Heart left ventricle (tissue), 16 donors: ENCODE measurements at regions of chr2 and their contacts with region 1.

Region 1: DNA sequence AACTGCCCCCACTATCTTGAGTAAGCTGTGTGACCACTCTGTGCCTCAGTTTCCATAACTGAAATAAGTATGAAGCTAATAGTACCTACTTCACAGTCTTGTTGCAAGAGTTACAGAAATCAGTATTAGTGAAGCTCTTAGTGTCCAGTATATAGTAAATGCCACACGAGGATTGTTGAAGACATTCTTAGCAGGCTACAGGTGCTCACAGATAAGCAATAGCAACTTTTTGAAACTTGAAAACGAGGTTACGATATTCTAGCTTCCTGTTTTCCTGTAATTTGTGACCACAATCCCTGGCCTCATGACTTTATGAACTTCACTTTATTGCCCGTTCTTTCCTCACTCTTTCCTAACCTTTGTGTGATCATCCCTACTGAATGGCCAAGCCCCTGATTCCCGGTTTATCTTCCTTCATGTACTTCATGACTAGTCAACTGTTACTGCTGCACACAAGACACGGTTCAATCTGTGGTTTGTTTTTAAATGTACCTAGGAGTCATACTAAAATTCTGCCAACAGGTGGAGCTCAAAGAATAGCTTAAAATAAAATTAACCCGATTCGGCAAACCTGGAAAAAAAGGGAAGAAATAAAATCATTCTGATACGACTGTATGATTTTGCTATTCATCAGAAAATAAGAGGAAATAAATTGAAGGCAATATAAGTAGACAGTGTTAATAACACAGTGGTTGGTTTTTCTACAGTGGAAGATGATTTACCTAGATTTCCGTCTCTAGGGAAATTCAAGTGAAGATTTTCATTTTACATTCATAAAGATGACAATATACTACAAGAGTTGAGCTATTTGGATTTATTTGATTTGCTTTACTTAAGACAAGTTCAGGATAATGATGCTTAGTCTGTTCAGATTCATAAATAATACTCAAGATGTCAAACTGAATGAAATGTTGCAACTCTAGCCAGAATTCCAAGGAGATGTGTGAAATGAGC is 38.1 kb upstream of the STAT1 start:
- DNase-seq: no peak
- ATAC-seq: peak in 2 of 4 donors; percentile 18 to 45
- H3K4me3 ChIP-seq: no peak overlapping the region
- H3K27ac ChIP-seq: peak overlapping the region in 1 of 12 donors; percentile 10
- H3K4me1 ChIP-seq: peaks cover 0 to 37% (median 0%) of the 10 kb centered on the region in 12 donors
- H3K27me3 ChIP-seq: peaks cover 0 to 5% (median 0%) of the 10 kb centered on the region in 9 donors
- CTCF ChIP-seq: peak; percentile 38 to 68 (median 54)
- POLR2A ChIP-seq: no peak

Region 2: DNA sequence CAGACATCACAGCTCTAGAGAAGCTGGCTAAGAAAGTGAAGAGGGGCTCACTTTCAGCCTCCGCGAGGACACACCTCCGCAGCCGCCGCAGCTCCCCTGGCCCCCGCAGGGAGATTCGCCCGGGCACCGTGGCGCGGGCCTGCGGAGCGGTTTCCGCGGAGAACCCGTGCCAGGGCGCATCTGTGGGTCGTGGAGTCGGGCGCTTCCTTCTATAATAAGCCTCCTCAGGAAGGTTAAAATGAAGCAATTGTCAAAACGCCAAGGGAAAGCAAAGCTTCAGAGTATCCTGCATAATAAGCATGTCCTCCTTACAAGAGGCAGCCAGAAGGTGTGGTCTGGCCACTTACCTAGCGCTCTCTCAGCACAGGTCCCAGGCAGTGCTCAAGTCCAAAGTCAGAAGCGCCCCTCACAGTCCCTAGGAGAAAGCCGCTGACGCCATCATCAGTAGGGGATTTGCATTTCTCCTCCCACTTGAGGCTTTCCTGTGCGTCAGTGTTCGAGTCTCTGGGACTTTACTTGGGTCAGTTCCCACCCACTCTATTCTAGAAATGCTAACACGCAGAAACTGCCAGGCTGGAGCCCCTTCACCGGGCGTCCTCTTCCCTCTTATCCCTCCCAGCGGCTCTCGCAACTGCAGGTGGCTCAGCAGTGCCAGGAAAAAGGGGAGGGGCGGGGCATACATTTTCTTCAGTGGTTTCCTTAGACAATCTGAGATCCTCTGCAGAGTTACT is 98.7 kb after region 1 on chr2 and contains the start of gene STAT4:
- intact Hi-C with region 1: loop called (anchors 2 to 5 kb)
- DNase-seq: peak; percentile 36 to 69 (median 42)
- ATAC-seq: peak; percentile 49 to 81 (median 65)
- H3K4me3 ChIP-seq: peak within 1 kb of the TSS; percentile 19 to 70 (median 54)
- H3K27ac ChIP-seq: peak within 1 kb of the TSS in 4 of 12 donors; percentile 40 to 83 (median 58)
- H3K4me1 ChIP-seq: peaks cover 0 to 17% (median 2%) of the 10 kb centered on the region in 12 donors
- H3K27me3 ChIP-seq: no peaks in the 10 kb centered on the region
- CTCF ChIP-seq: no peak
- POLR2A ChIP-seq: no peak
- total RNA-seq, gene STAT4: 0.32 to 21.5 (median 3.1) TPM

Region 3: GRCh38 chr2:191515551-191515950 is 463.4 kb after region 1 on chr2:
- intact Hi-C with region 1: loop called in 8 of 10 experiments (anchors 2 to 10 kb)
- DNase-seq: no peak
- ATAC-seq: peak in 3 of 4 donors; percentile 31 to 53 (median 33)
- H3K4me3 ChIP-seq: no peak overlapping the region
- H3K27ac ChIP-seq: no peak overlapping the region
- H3K4me1 ChIP-seq: peaks cover 0 to 15% (median 0%) of the 10 kb centered on the region in 12 donors
- H3K27me3 ChIP-seq: no peaks in the 10 kb centered on the region
- CTCF ChIP-seq: no peak
- POLR2A ChIP-seq: no peak

Region 4: GRCh38 chr2:191521608-191522208 is 469.6 kb after region 1 on chr2:
- intact Hi-C with region 1: loop called in 9 of 10 experiments (anchors 2 to 10 kb)
- DNase-seq: no peak
- ATAC-seq: no peak
- H3K4me3 ChIP-seq: no peak overlapping the region
- H3K27ac ChIP-seq: no peak overlapping the region
- H3K4me1 ChIP-seq: no peaks in the 10 kb centered on the region
- H3K27me3 ChIP-seq: no peaks in the 10 kb centered on the region
- CTCF ChIP-seq: peak; percentile 72 to 93 (median 80)
- POLR2A ChIP-seq: no peak

Region 5: DNA sequence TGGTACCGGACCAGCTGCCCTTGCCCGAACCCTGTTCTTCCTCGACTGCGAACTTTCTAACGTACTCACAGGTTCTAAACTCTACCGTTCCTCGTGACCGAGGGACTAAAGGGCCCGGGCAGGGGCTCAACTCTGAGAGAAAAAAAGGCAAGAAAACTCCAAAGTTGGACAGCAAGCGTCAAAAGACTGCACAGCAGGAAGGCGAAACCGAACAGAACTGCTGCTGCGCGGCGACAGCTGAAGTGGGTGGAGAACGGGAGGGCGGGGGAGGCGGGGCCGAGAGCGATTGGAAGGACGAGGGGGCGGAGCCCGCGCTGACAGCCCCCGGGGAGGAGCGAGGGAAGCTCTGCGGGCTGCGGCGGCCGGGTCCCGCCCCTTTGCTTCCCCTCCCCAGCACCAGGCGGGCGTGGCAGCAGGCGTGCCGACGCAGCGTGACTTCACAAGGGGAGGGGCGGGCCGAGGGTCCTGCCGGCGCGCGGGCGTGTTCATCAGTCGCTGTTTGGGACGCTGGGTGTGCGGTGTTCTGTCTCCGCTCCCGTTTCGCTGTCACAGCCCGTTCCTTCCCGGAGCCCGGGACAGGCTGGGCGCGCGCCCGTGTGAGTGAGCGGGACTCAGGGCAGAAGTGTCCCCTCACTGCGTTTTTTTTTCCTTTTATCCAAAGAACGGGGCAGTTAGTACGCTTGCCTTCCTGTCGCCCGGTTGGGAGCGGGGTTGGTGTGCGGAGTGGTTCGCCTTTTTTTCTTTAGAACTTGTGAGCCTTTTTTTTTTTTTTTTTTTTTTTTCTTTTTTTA is 625.7 kb after region 1 on chr2 and contains the start of gene NABP1:
- intact Hi-C with region 1: no loop called
- DNase-seq: peak; percentile 99 to 100 (median 99)
- ATAC-seq: peak; percentile 98 to 100 (median 99)
- H3K4me3 ChIP-seq: peak within 1 kb of the TSS; percentile 50 to 84 (median 69)
- H3K27ac ChIP-seq: peak within 1 kb of the TSS; percentile 82 to 99 (median 92)
- H3K4me1 ChIP-seq: peaks cover 0 to 68% (median 5%) of the 10 kb centered on the region in 12 donors
- H3K27me3 ChIP-seq: no peaks in the 10 kb centered on the region
- CTCF ChIP-seq: no peak
- POLR2A ChIP-seq: peak; percentile 84 to 99
- total RNA-seq, gene NABP1: 1.5 to 36.3 (median 3.3) TPM